A549 (cell line): ENCODE measurements at regions of chr3 and their contacts with region 1.

Region 1: GRCh38 chr3:33883538-33883950 is 85.1 kb downstream of the PDCD6IP start:
- DNase-seq: peak; percentile 21 to 33
- ATAC-seq: peak in 1 of 2 experiments; percentile 44; a peak in 2 of 6 replicates
- H3K4me3 ChIP-seq: peak overlapping the region; percentile 14; the same call in 2 of the 3 replicates
- H3K27ac ChIP-seq: peak overlapping the region; percentile 2 to 52; a peak in 2 of 6 replicates
- H3K4me1 ChIP-seq: peaks cover 6% of the 10 kb centered on the region; the same call in 1 of the 3 replicates
- CTCF ChIP-seq: peak; percentile 94
- EP300 ChIP-seq: no peak
- POLR2A ChIP-seq: no peak
- RAD21 ChIP-seq: peak; percentile 85 to 95

Region 2: GRCh38 chr3:33869977-33870376 is 13.6 kb before region 1 on chr3:
- CTCF ChIA-PET with region 1: interaction called, 20 read pairs
- POLR2A ChIA-PET with region 1: no interaction called
- DNase-seq: no peak
- ATAC-seq: no peak
- H3K4me3 ChIP-seq: no peak overlapping the region
- H3K27ac ChIP-seq: no peak overlapping the region
- H3K4me1 ChIP-seq: no peaks in the 10 kb centered on the region
- CTCF ChIP-seq: no peak
- EP300 ChIP-seq: no peak
- POLR2A ChIP-seq: no peak
- RAD21 ChIP-seq: no peak

Region 3: DNA sequence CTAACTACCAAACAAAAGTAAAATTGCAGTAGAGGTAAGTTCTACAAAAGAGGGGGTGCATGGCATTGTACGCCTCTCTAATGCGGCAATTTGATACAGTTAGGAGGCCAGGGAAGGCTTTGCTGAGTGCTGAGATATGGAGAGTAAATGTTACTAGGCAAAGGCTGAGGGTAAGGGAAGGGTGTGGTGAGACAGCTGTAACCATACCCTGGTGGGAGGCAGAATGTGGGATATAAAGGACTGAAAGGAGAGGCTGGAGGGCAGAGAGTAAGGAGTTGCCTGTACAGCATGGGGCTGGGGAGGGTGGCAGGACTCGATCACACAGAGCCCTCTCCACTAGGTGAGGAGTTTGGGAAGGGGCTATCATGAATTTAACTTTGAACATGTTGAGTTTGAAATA is 21.2 kb after region 1 on chr3:
- CTCF ChIA-PET with region 1: interaction called, 13 read pairs
- POLR2A ChIA-PET with region 1: no interaction called
- DNase-seq: no peak
- ATAC-seq: no peak
- H3K4me3 ChIP-seq: no peak overlapping the region
- H3K27ac ChIP-seq: no peak overlapping the region
- H3K4me1 ChIP-seq: no peaks in the 10 kb centered on the region
- CTCF ChIP-seq: no peak
- EP300 ChIP-seq: no peak
- POLR2A ChIP-seq: no peak
- RAD21 ChIP-seq: no peak

Region 4: DNA sequence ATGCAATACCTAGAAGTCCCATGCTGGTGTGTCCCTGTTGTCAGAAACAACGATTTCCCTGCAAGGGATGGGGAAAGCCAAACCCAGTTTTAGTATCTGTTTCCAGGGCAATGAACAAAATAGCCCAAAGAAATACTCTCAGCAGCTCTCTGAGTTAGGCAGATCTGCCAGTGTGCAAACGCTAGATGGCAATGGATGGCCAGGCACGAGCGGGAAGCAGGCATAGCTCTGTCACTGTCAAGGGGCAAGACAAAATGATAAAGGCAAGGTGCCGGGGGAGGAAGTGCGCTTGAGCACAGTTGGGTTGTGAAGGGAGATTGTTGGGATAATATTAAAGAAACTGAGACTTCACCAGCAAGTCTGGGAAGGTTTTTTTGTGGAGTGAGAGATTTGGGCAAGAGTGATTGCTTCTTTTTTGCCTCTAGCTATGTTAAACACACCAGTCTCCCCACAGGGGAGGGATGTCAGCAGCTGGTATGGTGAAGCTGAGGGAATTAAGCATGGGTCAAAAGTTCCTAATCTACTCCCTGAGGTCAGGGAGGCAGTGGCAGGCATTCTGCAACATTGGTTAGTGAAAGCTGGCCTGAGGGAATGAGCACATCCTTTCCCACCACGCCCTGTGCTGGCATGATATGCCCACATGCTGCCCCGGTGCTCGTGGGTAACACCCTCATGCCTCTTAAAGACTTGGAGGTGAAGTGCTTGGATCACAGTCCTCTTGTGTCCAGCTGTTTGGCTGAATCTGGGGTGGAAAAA is 32.4 kb after region 1 on chr3:
- CTCF ChIA-PET with region 1: interaction called, 18 read pairs
- POLR2A ChIA-PET with region 1: no interaction called
- DNase-seq: peak; percentile 46 to 69
- ATAC-seq: peak; percentile 86 to 94
- H3K4me3 ChIP-seq: no peak overlapping the region
- H3K27ac ChIP-seq: no peak overlapping the region
- H3K4me1 ChIP-seq: peaks cover 17% of the 10 kb centered on the region
- CTCF ChIP-seq: peak; percentile 57
- EP300 ChIP-seq: no peak
- POLR2A ChIP-seq: no peak
- RAD21 ChIP-seq: peak; percentile 81 to 92

Region 5: DNA sequence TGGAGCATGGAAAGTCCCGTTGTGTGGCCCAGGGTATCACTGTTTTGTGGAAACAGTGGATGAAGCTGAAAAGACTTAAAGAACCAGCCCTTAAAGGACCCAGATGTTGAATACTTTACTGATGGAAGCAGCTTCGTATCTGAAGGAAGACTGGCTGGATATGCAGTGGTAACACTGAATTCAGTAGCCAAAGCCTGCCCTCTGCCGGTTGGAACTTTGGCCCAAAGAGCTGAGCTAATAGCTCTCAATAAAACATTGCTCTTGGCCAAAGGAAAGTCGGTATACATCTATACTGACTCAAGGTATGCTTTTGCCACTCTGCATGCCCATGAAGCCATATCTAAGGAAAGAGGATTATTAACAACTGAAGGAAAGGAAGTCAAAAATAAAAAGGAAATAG is 800.3 kb after region 1 on chr3:
- CTCF ChIA-PET with region 1: interaction called, 116 read pairs
- POLR2A ChIA-PET with region 1: no interaction called
- DNase-seq: peak; percentile 2 to 64
- ATAC-seq: peak; percentile 88 to 94
- H3K4me3 ChIP-seq: no peak overlapping the region
- H3K27ac ChIP-seq: no peak overlapping the region
- H3K4me1 ChIP-seq: no peaks in the 10 kb centered on the region
- CTCF ChIP-seq: peak; percentile 69
- EP300 ChIP-seq: no peak
- POLR2A ChIP-seq: no peak
- RAD21 ChIP-seq: peak; percentile 82 to 87